ENCODE measurements at regions of chr3 and their contacts with region 1.

Region 1: DNA sequence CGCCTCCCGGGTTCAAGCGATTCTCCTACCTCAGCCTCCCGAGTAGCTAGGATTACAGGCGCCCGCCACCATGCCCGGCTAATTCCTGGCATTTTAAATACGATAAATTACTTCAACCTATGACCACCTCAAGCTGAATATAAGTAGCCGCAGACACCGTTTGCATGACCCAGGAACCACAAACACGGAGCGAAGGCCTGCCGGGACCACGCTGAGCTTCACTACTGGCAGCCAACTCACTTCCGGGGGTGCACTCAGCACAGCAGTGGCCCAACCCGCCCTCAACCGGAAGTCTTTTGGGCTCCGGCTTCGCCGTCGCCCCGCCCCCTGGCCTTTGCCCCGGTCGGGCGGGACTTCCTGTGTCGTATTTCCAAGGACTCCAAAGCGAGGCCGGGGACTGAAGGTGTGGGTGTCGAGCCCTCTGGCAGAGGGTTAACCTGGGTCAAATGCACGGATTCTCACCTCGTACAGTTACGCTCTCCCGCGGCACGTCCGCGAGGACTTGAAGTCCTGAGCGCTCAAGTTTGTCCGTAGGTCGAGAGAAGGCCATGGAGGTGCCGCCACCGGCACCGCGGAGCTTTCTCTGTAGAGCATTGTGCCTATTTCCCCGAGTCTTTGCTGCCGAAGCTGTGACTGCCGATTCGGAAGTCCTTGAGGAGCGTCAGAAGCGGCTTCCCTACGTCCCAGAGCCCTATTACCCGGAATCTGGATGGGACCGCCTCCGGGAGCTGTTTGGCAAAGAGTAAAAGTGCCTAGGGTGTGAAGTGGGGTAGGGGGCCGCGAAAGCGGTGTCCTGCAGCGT is at the start of gene TIMMDC1:
- DNase-seq: peak; percentile 97 to 99
- ATAC-seq: peak; percentile 97 to 100 (median 98)
- H3K4me3 ChIP-seq: peak within 1 kb of the TSS; percentile 87
- H3K4me3 Mint-ChIP-seq: peak within 1 kb of the TSS; percentile 100
- H3K27ac ChIP-seq: peak within 1 kb of the TSS; percentile 93
- H3K27ac Mint-ChIP-seq: peak within 1 kb of the TSS; percentile 98 to 99
- H3K4me1 ChIP-seq: peaks cover 18% of the 10 kb centered on the region
- H3K4me1 Mint-ChIP-seq: peaks cover 30 to 31% of the 10 kb centered on the region in 2 donors
- H3K27me3 ChIP-seq: no peaks in the 10 kb centered on the region
- H3K27me3 Mint-ChIP-seq: no peaks in the 10 kb centered on the region
- CTCF ChIP-seq: no peak
- total RNA-seq, gene TIMMDC1: 31.9 to 50.1 (median 34.1) TPM

Region 2: DNA sequence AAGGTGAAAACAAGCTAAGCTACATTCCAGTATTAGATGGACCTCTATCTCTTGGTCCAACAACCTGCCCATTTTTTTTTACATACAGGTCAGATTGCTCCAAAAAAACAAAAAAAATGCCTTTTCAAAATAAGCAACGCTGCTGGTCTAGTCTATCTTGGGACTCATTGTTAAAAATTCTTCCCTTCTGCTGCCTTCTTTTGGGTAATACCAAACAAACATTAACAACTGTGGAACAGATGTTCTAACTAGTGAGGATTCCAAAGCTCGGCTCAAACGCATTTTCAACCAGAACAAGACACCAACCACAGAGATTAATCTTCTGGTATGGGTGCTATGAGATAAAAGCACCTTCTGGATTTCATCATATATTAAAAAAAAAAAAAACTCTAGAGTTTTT is 179.5 kb before region 1 on chr3:
- intact Hi-C with region 1: no loop called
- DNase-seq: no peak
- ATAC-seq: no peak
- H3K4me3 ChIP-seq: no peak overlapping the region
- H3K4me3 Mint-ChIP-seq: no peak overlapping the region
- H3K27ac ChIP-seq: no peak overlapping the region
- H3K27ac Mint-ChIP-seq: no peak overlapping the region
- H3K4me1 ChIP-seq: peaks cover 12% of the 10 kb centered on the region
- H3K4me1 Mint-ChIP-seq: peaks cover 15 to 26% of the 10 kb centered on the region in 2 donors
- H3K27me3 ChIP-seq: no peaks in the 10 kb centered on the region
- H3K27me3 Mint-ChIP-seq: no peaks in the 10 kb centered on the region
- CTCF ChIP-seq: no peak

Region 3: GRCh38 chr3:119469381-119470189 is 28.8 kb before region 1 on chr3:
- intact Hi-C with region 1: loop called (anchors 1 kb)
- DNase-seq: peak in 1 of 2 donors; percentile 44
- ATAC-seq: peak in 1 of 3 donors; percentile 45
- H3K4me3 ChIP-seq: peak overlapping the region; percentile 66
- H3K4me3 Mint-ChIP-seq: peak overlapping the region; percentile 93
- H3K27ac ChIP-seq: peak overlapping the region; percentile 57
- H3K27ac Mint-ChIP-seq: peak overlapping the region; percentile 84 to 89
- H3K4me1 ChIP-seq: peaks cover 26% of the 10 kb centered on the region
- H3K4me1 Mint-ChIP-seq: peaks cover 28 to 34% of the 10 kb centered on the region in 2 donors
- H3K27me3 ChIP-seq: no peaks in the 10 kb centered on the region
- H3K27me3 Mint-ChIP-seq: no peaks in the 10 kb centered on the region
- CTCF ChIP-seq: no peak

Region 4: DNA sequence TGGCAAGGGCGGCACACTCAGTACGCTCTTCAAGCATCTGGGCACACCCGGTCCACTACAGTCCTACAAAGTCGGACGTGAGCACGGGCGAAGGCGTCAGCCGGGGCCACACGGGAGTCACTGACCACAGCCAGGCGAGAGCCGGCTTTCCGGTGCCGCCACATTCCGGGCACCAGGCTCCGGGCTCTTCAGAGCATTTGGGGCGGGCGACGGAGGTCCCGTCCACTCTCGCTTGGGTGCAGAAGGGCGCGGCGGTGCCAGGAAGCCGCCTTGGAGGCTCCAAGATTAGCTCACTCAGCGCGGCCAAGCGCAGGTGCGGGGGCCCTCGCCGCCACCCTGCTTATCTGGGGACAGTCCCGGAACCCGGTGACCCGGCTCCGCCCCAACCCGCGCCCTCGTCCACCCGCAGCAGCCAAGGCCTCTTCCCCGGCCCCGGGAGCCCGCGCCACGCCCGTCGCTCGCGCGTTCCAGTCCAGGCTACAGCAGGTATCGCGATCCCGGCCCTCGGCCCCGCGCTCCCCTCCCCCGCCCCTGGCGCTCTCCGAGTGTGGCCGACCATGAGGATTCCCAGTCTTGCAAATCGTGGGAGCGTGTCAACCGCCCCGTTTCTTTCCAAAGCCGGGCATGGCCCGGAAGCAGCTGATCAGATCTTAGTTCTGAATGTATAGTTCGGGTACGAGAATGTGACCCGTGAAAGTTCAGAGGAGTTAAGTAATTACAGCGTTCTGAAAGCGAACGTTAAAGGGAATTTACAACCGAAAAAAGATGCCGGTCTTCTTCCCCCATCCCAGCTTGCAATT is 81.2 kb after region 1 on chr3 and contains the start of gene ADPRH:
- intact Hi-C with region 1: loop called (anchors 5 kb)
- DNase-seq: peak; percentile 51 to 54
- ATAC-seq: peak; percentile 75 to 84 (median 78)
- H3K4me3 ChIP-seq: peak within 1 kb of the TSS; percentile 74
- H3K4me3 Mint-ChIP-seq: peak within 1 kb of the TSS; percentile 91
- H3K27ac ChIP-seq: peak within 1 kb of the TSS; percentile 93
- H3K27ac Mint-ChIP-seq: peak within 1 kb of the TSS; percentile 85 to 88
- H3K4me1 ChIP-seq: peaks cover 14% of the 10 kb centered on the region
- H3K4me1 Mint-ChIP-seq: peaks cover 12 to 18% of the 10 kb centered on the region in 2 donors
- H3K27me3 ChIP-seq: no peaks in the 10 kb centered on the region
- H3K27me3 Mint-ChIP-seq: no peaks in the 10 kb centered on the region
- CTCF ChIP-seq: no peak
- total RNA-seq, gene ADPRH: 3.8 to 6.2 (median 4.5) TPM

Region 5: DNA sequence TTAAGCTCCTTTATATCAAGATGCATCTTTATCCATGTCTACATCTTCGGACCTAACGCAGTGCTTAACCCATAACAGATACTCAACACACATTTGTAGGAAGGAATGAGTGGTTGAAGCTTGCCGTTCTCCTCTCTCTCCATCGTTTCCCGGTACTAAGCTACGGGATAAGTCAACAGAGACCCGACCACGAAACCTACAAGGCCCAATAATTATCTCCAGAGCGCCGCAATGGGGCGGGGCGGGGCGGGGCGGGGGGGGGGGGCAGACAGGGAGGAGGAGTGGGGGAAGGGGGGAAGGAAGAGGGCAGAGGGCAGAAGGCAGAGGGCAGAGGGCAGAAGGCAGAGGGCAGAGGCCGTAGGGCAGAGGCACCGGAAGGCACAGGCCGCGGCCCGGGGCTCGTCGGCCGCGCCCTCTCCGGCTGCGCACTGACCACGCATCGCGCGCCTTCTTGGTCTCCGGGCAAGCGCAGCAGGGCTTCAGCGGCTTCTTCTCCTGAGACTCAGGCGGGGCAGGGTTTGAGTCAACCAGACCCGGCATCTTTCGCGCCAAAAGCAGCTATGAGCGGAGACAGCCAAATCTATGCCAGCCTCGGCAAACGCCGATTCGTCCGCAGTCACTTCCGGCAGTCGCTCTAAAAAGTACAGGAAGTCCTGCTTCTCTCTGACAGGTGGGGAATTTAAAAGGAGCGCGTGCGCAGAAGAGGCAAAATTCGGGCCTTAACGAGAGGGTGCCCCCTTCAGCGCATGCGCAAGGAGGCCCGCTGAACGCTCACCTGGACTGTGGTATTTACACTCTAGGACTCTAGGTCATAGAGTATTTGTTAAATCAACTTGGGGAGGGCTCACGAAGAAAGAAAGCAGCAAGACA is 178.6 kb after region 1 on chr3 and contains the start of gene COX17:
- intact Hi-C with region 1: loop called (anchors 2 kb)
- DNase-seq: peak; percentile 91 to 99
- ATAC-seq: peak; percentile 86 to 92 (median 89)
- H3K4me3 ChIP-seq: peak within 1 kb of the TSS; percentile 60
- H3K4me3 Mint-ChIP-seq: peak within 1 kb of the TSS; percentile 95
- H3K27ac ChIP-seq: peak within 1 kb of the TSS; percentile 93
- H3K27ac Mint-ChIP-seq: peak within 1 kb of the TSS; percentile 97 to 99
- H3K4me1 ChIP-seq: no peaks in the 10 kb centered on the region
- H3K4me1 Mint-ChIP-seq: peaks cover 30 to 31% of the 10 kb centered on the region in 2 donors
- H3K27me3 ChIP-seq: no peaks in the 10 kb centered on the region
- H3K27me3 Mint-ChIP-seq: no peaks in the 10 kb centered on the region
- CTCF ChIP-seq: no peak
- total RNA-seq, gene COX17: 35.6 to 44.8 (median 40.6) TPM

Measured in natural killer cell (primary cell).